Activated CD8-positive, alpha-beta T cell treated with anti-CD3 and anti-CD28 coated beads for 36 hours (primary cell): ENCODE measurements at regions of chr12 and their contacts with region 1.

Region 1: DNA sequence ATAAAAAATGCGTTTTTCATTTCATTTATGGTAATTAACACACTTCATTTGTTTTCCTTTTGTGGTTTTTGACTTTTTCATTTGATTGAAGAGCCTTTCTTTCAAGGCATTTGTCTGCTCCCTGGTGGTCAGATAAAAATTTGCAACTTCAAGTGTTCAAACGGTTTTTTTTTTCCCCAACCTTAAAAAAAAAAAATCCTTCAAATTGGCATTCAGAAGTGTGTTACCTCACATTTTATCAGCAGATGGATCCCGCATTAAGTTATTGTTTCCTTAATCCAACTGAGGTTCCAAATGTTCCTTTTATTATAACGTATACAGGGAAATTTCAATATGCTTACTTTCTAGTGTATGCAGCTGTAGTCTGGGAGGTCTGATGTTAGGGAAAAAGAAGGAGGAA is 47.2 kb downstream of the MYF5 start:
- DNase-seq: peak; percentile 4
- ATAC-seq: no peak
- H3K4me3 Mint-ChIP-seq: no peak overlapping the region
- H3K27ac Mint-ChIP-seq: no peak overlapping the region
- H3K4me1 Mint-ChIP-seq: no peaks in the 10 kb centered on the region
- H3K27me3 Mint-ChIP-seq: no peaks in the 10 kb centered on the region
- CTCF ChIP-seq: peak; percentile 28

Region 2: GRCh38 chr12:80412369-80412953 is 351.4 kb before region 1 on chr12:
- CTCF ChIA-PET with region 1: interaction called, 3 read pairs
- POLR2A ChIA-PET with region 1: no interaction called
- intact Hi-C with region 1: loop called (anchors 5 kb)
- DNase-seq: no peak
- ATAC-seq: no peak
- H3K4me3 Mint-ChIP-seq: no peak overlapping the region
- H3K27ac Mint-ChIP-seq: no peak overlapping the region
- H3K4me1 Mint-ChIP-seq: no peaks in the 10 kb centered on the region
- H3K27me3 Mint-ChIP-seq: no peaks in the 10 kb centered on the region
- CTCF ChIP-seq: peak; percentile 69

Region 3: DNA sequence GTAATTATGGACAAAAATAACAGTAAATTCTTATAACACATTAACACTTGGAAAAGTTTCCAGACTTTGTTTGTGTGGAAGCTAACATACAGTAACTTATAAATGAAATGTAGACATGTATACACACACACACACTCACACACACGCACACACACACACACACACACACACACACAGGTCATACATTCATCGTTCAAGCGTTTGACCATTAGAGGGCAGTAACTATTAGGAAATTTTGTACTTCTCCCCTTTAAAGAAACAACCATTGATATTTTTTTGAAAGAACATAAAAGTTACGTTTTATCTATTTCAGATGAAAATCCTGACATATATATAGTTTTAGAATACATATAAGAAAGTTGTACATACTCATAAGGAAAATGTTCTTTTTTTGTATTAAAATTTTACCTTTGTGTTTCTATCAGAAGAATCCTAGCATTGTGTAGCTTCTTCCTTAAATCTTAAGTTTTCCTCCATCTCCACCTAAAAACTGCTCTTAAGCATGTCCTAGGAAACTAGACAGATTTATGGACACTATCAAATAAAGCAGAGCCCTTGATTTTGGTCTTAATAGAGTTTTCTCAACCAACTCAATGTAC is 290.9 kb before region 1 on chr12:
- CTCF ChIA-PET with region 1: no interaction called
- POLR2A ChIA-PET with region 1: no interaction called
- intact Hi-C with region 1: no loop called
- DNase-seq: peak; percentile 5
- ATAC-seq: no peak
- H3K4me3 Mint-ChIP-seq: no peak overlapping the region
- H3K27ac Mint-ChIP-seq: no peak overlapping the region
- H3K4me1 Mint-ChIP-seq: no peaks in the 10 kb centered on the region
- H3K27me3 Mint-ChIP-seq: no peaks in the 10 kb centered on the region
- CTCF ChIP-seq: no peak

Region 4: DNA sequence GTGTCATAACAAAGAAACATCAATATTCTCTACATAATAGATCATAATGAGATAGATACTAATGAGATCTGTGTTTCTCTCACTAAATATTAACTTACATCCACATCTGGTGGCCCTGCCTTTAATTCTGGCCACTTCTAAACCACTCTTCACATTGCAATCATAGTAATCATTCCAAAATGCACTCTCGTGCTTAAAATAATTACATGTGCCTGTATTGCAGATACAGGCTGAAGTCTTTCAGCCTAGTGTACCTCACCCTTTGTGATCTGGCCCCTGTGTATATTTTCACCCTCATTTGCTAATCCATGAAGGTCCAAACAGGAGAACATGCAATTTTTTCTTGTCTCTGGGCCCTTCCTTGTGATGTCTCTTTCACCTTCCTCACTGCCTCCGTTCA is 65.9 kb after region 1 on chr12:
- CTCF ChIA-PET with region 1: no interaction called
- POLR2A ChIA-PET with region 1: no interaction called
- intact Hi-C with region 1: no loop called
- DNase-seq: no peak
- ATAC-seq: no peak
- H3K4me3 Mint-ChIP-seq: no peak overlapping the region
- H3K27ac Mint-ChIP-seq: no peak overlapping the region
- H3K4me1 Mint-ChIP-seq: no peaks in the 10 kb centered on the region
- H3K27me3 Mint-ChIP-seq: no peaks in the 10 kb centered on the region
- CTCF ChIP-seq: no peak